Vagina (tissue), 2 donors: ENCODE measurements at regions of chr16 and their contacts with region 1.

Region 1: GRCh38 chr16:81505011-81505661 is 60.5 kb downstream of the CMIP start:
- DNase-seq: no peak
- H3K4me3 ChIP-seq: no peak overlapping the region
- H3K27ac ChIP-seq: peak overlapping the region; percentile 62
- H3K4me1 ChIP-seq: peaks cover 33% of the 10 kb centered on the region
- H3K27me3 ChIP-seq: no peaks in the 10 kb centered on the region
- CTCF ChIP-seq: no peak
- POLR2A ChIP-seq: peak in 1 of 2 donors; percentile 2

Region 2: DNA sequence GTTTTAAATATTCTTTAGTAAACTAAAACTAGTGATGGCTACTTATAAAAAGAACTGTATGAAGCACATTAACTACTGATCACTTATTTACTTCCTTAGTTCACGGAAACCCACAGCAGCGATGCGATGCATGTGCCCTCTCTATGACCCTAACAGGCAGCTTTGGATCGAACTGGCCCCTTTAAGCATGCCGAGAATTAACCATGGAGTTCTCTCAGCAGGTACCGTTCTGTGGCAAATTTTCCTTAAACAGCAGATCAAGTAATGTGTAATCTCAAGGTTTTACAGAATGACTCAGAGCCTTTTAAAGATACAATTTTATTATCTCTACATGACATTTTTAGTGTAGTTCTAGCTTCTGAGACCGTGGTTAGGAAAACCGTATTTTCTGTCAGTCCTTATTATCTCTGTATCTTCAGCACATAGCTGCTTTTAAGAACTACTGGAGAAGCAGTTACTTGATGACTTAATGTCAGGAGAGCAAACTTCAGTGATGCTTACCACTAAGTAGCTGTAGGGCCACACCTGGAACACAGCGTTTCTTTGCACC is 147.3 kb before region 1 on chr16:
- intact Hi-C with region 1: no loop called
- DNase-seq: no peak
- H3K4me3 ChIP-seq: no peak overlapping the region
- H3K27ac ChIP-seq: no peak overlapping the region
- H3K4me1 ChIP-seq: no peaks in the 10 kb centered on the region
- H3K27me3 ChIP-seq: no peaks in the 10 kb centered on the region
- CTCF ChIP-seq: no peak
- POLR2A ChIP-seq: no peak

Region 3: GRCh38 chr16:81486555-81487061 is 18.5 kb before region 1 on chr16:
- intact Hi-C with region 1: loop called (anchors 1 kb)
- DNase-seq: no peak
- H3K4me3 ChIP-seq: no peak overlapping the region
- H3K27ac ChIP-seq: peak overlapping the region; percentile 33
- H3K4me1 ChIP-seq: peaks cover 93% of the 10 kb centered on the region
- H3K27me3 ChIP-seq: no peaks in the 10 kb centered on the region
- CTCF ChIP-seq: no peak
- POLR2A ChIP-seq: no peak

Region 4: DNA sequence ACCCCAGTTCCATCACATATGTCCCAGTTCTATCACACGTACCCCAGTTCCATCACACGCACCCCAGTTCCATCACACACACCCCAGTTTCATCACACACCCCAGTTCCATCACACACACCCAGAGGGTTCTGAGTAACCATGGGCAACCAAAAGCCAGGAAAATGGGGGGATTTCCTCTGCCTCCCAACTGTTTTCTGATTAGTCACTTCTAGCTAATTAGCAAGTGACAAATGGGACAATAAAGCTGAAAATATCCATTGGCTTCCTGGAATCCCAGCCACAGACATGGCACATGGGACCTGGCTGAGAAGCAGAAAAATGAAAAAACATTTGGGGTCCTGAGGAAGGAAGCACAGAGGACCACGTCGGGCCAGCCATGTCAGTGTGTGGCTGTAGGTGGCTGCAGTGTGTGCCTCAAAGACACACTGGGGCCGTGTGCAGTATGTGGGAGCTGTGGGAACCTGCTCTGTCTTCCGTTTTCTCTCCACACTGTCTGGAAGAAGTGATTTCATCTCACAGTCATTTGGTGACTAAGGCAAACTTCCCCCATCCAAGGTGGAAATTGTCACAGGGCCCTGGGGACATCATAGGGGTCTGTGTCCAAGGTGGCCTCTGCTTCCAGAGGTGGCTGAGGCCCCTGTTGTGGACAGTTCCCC is 46.1 kb after region 1 on chr16:
- intact Hi-C with region 1: no loop called
- DNase-seq: no peak
- H3K4me3 ChIP-seq: no peak overlapping the region
- H3K27ac ChIP-seq: no peak overlapping the region
- H3K4me1 ChIP-seq: peaks cover 38% of the 10 kb centered on the region
- H3K27me3 ChIP-seq: no peaks in the 10 kb centered on the region
- CTCF ChIP-seq: no peak
- POLR2A ChIP-seq: no peak